ENCODE measurements at regions of chr2 and their contacts with region 1.

Region 1: DNA sequence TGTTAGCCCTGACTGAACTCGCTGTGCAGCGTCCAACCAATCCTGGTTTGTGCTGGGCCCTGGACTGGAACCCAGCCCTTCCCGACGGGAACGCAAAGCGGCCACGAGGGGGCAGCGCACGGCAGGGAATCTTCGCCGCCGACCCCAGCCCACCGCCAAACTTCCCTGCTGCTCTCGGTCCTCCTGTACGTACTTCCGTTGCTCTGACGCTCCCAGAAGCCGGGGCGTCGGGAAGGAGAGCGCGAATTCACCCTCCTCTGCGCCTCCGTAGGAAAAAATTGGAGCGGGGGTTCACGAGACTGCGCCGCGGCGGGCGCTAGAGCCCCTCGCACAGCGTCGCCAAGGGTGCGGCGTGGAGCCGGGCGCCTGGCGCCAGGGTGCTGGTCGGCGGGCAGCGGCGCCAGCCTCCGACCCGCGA is 948 bp upstream of the SH3RF3 start:
- DNase-seq: peak; percentile 49 to 76 (median 70)
- ATAC-seq: peak; percentile 80
- H3K4me3 ChIP-seq: peak overlapping the region; percentile 64
- H3K4me3 Mint-ChIP-seq: peak overlapping the region; percentile 81 to 100 (median 87)
- H3K27ac ChIP-seq: peak overlapping the region; percentile 67
- H3K27ac Mint-ChIP-seq: peak overlapping the region in 8 of 9 donors; percentile 64 to 93 (median 80)
- H3K4me1 ChIP-seq: peaks cover 0 to 16% of the 10 kb centered on the region in 2 donors
- H3K4me1 Mint-ChIP-seq: peaks cover 24 to 68% (median 55%) of the 10 kb centered on the region in 7 donors
- H3K27me3 ChIP-seq: no peaks in the 10 kb centered on the region
- H3K27me3 Mint-ChIP-seq: peaks cover 0 to 54% (median 0%) of the 10 kb centered on the region in 5 donors

Region 2: GRCh38 chr2:108786354-108787199 is 341.5 kb before region 1 on chr2 and contains the start of gene CCDC138:
- CTCF ChIA-PET with region 1: no interaction called
- POLR2A ChIA-PET with region 1: no interaction called
- intact Hi-C with region 1: loop called in 1 of 2 experiments (anchors 2 kb)
- DNase-seq: peak; percentile 86 to 93 (median 91)
- ATAC-seq: peak; percentile 98
- H3K4me3 ChIP-seq: peak within 1 kb of the TSS; percentile 88
- H3K4me3 Mint-ChIP-seq: peak within 1 kb of the TSS; percentile 88 to 100 (median 97)
- H3K27ac ChIP-seq: peak within 1 kb of the TSS; percentile 90
- H3K27ac Mint-ChIP-seq: peak within 1 kb of the TSS; percentile 69 to 99 (median 97)
- H3K4me1 ChIP-seq: peaks cover 6 to 13% of the 10 kb centered on the region in 2 donors
- H3K4me1 Mint-ChIP-seq: peaks cover 6 to 21% (median 17%) of the 10 kb centered on the region in 7 donors
- H3K27me3 ChIP-seq: no peaks in the 10 kb centered on the region
- H3K27me3 Mint-ChIP-seq: no peaks in the 10 kb centered on the region
- total RNA-seq, gene CCDC138: 2.7 to 10.5 (median 7.5) TPM

Region 3: DNA sequence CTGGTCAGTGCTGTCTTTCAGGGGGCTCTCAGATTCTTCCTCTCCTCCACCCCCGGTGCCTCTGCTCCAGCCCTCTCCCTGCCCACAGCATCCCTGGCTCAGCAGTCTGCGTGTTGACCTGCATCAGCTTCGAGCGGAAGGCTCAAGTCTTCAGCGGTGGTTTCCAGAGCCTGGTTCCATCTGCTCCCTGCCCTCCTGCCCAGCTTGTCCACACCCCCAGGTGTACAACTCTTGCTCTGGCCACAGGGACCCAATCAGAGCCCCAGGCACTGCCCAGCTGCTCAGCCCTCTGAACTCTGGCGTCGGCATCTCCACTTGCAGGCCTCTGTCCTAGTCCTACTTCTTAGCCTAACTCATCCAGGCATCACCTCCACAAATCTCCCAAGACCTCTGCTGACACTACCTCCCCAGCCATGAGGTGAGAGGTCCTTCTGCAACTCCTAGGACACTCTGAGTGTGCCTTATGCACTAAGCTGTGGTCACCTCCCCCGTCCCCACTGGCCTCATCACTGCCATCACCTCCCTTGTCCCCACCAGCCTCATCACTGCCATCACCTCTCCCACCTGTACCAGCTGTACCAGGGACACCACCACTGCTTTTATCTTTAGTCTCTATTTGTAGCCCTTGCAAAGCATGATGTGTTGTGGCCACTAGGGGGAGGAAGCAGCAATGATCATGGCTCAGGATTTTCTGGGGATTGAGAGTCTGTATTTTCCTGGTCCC is 200.0 kb before region 1 on chr2:
- CTCF ChIA-PET with region 1: interaction called, 3 read pairs
- POLR2A ChIA-PET with region 1: no interaction called
- intact Hi-C with region 1: loop called in 1 of 2 experiments (anchors 1 kb)
- DNase-seq: peak in 6 of 9 donors; percentile 33 to 59 (median 50)
- ATAC-seq: peak; percentile 38
- H3K4me3 ChIP-seq: no peak overlapping the region
- H3K4me3 Mint-ChIP-seq: no peak overlapping the region
- H3K27ac ChIP-seq: no peak overlapping the region
- H3K27ac Mint-ChIP-seq: peak overlapping the region in 5 of 9 donors; percentile 0 to 28 (median 4)
- H3K4me1 ChIP-seq: peaks cover 0 to 5% of the 10 kb centered on the region in 2 donors
- H3K4me1 Mint-ChIP-seq: peaks cover 2 to 34% (median 25%) of the 10 kb centered on the region in 7 donors
- H3K27me3 ChIP-seq: no peaks in the 10 kb centered on the region
- H3K27me3 Mint-ChIP-seq: no peaks in the 10 kb centered on the region

Region 4: GRCh38 chr2:109208081-109208950 is 80.3 kb after region 1 on chr2:
- CTCF ChIA-PET with region 1: no interaction called
- POLR2A ChIA-PET with region 1: interaction called, 3 read pairs
- intact Hi-C with region 1: loop called in 1 of 2 experiments (anchors 1 kb)
- DNase-seq: no peak
- ATAC-seq: no peak
- H3K4me3 ChIP-seq: no peak overlapping the region
- H3K4me3 Mint-ChIP-seq: no peak overlapping the region
- H3K27ac ChIP-seq: no peak overlapping the region
- H3K27ac Mint-ChIP-seq: no peak overlapping the region
- H3K4me1 ChIP-seq: peaks cover under 1 to 3% of the 10 kb centered on the region in 2 donors
- H3K4me1 Mint-ChIP-seq: peaks cover 12 to 41% (median 32%) of the 10 kb centered on the region in 7 donors
- H3K27me3 ChIP-seq: no peaks in the 10 kb centered on the region
- H3K27me3 Mint-ChIP-seq: peaks cover 15 to 76% (median 24%) of the 10 kb centered on the region in 5 donors

Region 5: GRCh38 chr2:109387778-109388468 is 259.9 kb after region 1 on chr2:
- CTCF ChIA-PET with region 1: no interaction called
- POLR2A ChIA-PET with region 1: no interaction called
- intact Hi-C with region 1: loop called in 1 of 2 experiments (anchors 1 kb)
- DNase-seq: no peak
- ATAC-seq: no peak
- H3K4me3 ChIP-seq: no peak overlapping the region
- H3K4me3 Mint-ChIP-seq: no peak overlapping the region
- H3K27ac ChIP-seq: no peak overlapping the region
- H3K27ac Mint-ChIP-seq: no peak overlapping the region
- H3K4me1 ChIP-seq: no peaks in the 10 kb centered on the region
- H3K4me1 Mint-ChIP-seq: peaks cover 0 to 4% (median 0%) of the 10 kb centered on the region in 7 donors
- H3K27me3 ChIP-seq: no peaks in the 10 kb centered on the region
- H3K27me3 Mint-ChIP-seq: no peaks in the 10 kb centered on the region

Region 6: DNA sequence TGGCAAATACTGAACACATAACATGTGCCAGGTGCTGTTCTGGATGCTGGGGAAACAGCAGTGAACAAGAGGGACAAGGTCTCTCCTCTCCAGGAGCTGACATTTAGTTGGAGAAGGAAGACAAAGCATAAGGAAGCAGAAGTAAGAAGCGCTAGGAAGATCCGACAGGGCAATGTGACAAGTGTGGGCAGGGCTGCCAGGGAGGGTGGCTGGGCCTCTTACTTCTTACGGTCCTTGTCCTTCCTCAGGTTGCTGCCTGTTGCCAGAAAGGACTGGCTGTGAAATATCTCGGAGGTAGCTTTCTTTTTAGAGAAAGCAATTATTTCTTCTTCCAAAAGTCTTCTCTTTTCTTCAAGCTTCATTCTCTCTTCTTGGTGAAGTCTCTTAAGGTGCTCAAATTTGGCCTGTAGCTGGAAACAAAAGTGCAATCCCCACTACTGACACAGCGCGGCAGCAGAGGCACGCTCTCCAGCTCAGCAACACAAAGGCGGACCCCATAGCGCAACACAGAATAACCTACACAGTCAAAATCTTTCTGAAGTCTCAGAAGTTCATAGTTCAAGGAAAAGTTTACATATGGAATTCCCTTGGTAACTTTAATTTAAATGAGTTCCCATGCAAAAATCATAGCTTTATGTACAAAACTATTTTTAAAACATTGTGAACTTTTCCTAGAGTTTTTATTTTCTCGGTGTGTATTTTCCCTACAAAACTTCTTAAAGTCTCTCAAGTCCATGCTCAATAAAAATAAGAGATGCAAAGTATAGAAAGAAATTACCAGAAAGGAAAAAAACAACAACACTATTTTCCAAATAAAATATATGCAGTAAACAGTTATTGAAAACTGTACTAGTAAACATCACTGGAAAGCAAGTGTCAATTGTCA is 418.0 kb after region 1 on chr2:
- CTCF ChIA-PET with region 1: no interaction called
- POLR2A ChIA-PET with region 1: no interaction called
- intact Hi-C with region 1: loop called in 1 of 2 experiments (anchors 1 kb)
- DNase-seq: peak; percentile 26 to 55 (median 48)
- ATAC-seq: peak; percentile 82
- H3K4me3 ChIP-seq: no peak overlapping the region
- H3K4me3 Mint-ChIP-seq: no peak overlapping the region
- H3K27ac ChIP-seq: no peak overlapping the region
- H3K27ac Mint-ChIP-seq: no peak overlapping the region
- H3K4me1 ChIP-seq: no peaks in the 10 kb centered on the region
- H3K4me1 Mint-ChIP-seq: no peaks in the 10 kb centered on the region
- H3K27me3 ChIP-seq: no peaks in the 10 kb centered on the region
- H3K27me3 Mint-ChIP-seq: peaks cover 0 to 26% (median 0%) of the 10 kb centered on the region in 5 donors